ENCODE measurements at regions of chr2 and their contacts with region 1.

Region 1: GRCh38 chr2:64052468-64053241 is 33.4 kb upstream of the VPS54 start:
- DNase-seq: no peak
- H3K4me3 ChIP-seq: no peak overlapping the region
- H3K27ac ChIP-seq: no peak overlapping the region
- H3K4me1 ChIP-seq: peaks cover 0 to 8% (median 3%) of the 10 kb centered on the region in 4 donors
- H3K27me3 ChIP-seq: no peaks in the 10 kb centered on the region
- CTCF ChIP-seq: no peak
- EP300 ChIP-seq: no peak
- POLR2A ChIP-seq: no peak

Region 2: DNA sequence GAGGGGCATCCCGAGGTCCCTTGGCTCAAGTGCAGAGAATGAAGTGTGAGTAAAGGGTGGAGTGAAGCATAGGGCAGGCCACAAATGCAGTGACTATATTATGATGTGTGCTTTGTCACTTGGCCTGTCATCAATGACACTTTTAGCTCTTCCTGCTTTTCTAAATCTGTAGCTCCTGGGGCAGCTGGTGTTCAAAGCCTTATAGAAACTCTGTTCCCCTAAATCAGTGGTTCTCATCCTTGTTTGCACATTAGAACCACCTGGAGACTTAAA is 265.8 kb after region 1 on chr2:
- in situ Hi-C with region 1: loop called in 3 of 4 experiments (anchors 5 to 25 kb)
- intact Hi-C with region 1: no loop called
- DNase-seq: no peak
- H3K4me3 ChIP-seq: no peak overlapping the region
- H3K27ac ChIP-seq: no peak overlapping the region
- H3K4me1 ChIP-seq: peaks cover 0 to under 1% (median 0%) of the 10 kb centered on the region in 4 donors
- H3K27me3 ChIP-seq: no peaks in the 10 kb centered on the region
- CTCF ChIP-seq: no peak
- EP300 ChIP-seq: no peak
- POLR2A ChIP-seq: no peak

Region 3: DNA sequence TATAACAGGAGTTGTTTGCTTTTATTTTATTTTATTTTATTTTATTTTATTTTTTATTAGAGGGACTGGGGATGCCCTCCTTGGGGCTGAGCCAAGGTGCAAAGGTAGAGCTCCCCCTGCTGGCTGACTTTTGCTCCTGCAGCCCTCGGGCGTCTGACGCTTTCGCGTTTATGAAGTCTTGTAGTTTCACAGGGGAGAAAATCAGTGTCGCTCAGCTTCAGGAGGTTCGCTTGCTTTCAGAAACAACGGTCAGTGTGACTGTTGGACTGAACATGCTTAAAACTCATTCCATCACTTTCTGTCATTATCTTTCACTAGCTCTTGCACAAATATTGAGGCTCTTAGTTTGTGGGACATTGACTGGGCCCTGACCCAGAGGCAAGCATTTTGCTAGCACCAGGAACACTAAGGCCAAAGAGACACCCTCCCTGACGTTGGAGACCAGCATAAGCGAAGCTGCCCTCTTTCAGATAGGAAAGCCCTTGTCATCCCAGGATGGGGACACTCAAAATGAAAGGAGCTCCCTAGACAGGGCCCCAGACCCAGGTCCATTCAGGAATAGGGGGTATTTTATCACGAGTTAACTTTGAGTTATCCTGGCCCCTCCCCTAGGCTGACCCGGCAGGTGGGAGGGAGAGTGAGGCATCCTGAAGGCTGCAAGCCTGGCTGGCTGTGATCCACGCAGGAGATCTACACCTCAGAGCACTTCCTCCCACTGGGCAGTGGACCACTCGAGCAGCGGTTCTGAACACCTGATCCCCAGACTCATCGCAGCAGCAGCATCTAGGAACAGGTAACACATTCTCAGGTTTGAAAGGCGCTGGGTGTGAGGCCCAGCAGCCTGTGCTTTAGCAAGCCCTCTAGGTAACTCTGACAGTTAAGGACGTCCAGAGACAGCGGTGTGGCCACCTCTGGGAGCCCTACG is 435.7 kb after region 1 on chr2:
- in situ Hi-C with region 1: loop called (anchors 10 to 25 kb)
- intact Hi-C with region 1: no loop called
- DNase-seq: peak; percentile 78
- H3K4me3 ChIP-seq: no peak overlapping the region
- H3K27ac ChIP-seq: no peak overlapping the region
- H3K4me1 ChIP-seq: peaks cover 0 to 14% (median 5%) of the 10 kb centered on the region in 4 donors
- H3K27me3 ChIP-seq: no peaks in the 10 kb centered on the region
- CTCF ChIP-seq: peak; percentile 96 to 99 (median 98)
- EP300 ChIP-seq: no peak
- POLR2A ChIP-seq: no peak

Measured in transverse colon (tissue), 4 donors.